CD14-positive monocyte (primary cell): ENCODE measurements at regions of chr20 and their contacts with region 1.

Region 1: GRCh38 chr20:46530640-46531039 is 17.3 kb upstream of the ZNF334 start:
- DNase-seq: no peak
- H3K4me3 ChIP-seq: no peak overlapping the region
- H3K4me3 Mint-ChIP-seq: no peak overlapping the region
- H3K27ac ChIP-seq: no peak overlapping the region
- H3K27ac Mint-ChIP-seq: no peak overlapping the region
- H3K4me1 ChIP-seq: no peaks in the 10 kb centered on the region
- H3K4me1 Mint-ChIP-seq: no peaks in the 10 kb centered on the region
- H3K27me3 ChIP-seq: peaks cover 0 to 2% of the 10 kb centered on the region in 2 donors
- H3K27me3 Mint-ChIP-seq: peaks cover 9 to 21% (median 16%) of the 10 kb centered on the region in 3 donors
- CTCF ChIP-seq: no peak

Region 2: GRCh38 chr20:46607849-46608497 is 77.3 kb after region 1 on chr20:
- intact Hi-C with region 1: loop called in 1 of 2 experiments (anchors 2 kb)
- DNase-seq: no peak
- H3K4me3 ChIP-seq: no peak overlapping the region
- H3K4me3 Mint-ChIP-seq: no peak overlapping the region
- H3K27ac ChIP-seq: no peak overlapping the region
- H3K27ac Mint-ChIP-seq: no peak overlapping the region
- H3K4me1 ChIP-seq: no peaks in the 10 kb centered on the region
- H3K4me1 Mint-ChIP-seq: no peaks in the 10 kb centered on the region
- H3K27me3 ChIP-seq: peaks cover 0 to 4% of the 10 kb centered on the region in 2 donors
- H3K27me3 Mint-ChIP-seq: peaks cover 5 to 11% (median 7%) of the 10 kb centered on the region in 3 donors
- CTCF ChIP-seq: no peak